HEK293 (cell line): ENCODE measurements at regions of chr3 and their contacts with region 1.

Region 1: GRCh38 chr3:156217674-156218352 is 97.4 kb downstream of the KCNAB1 start:
- H3K4me3 ChIP-seq: no peak overlapping the region
- H3K27ac ChIP-seq: no peak overlapping the region; the same call in 1 of the 2 replicates
- H3K4me1 ChIP-seq: no peaks in the 10 kb centered on the region
- CTCF ChIP-seq: no peak

Region 2: GRCh38 chr3:156382458-156383346 is 164.9 kb after region 1 on chr3:
- CTCF ChIA-PET with region 1: no interaction called
- POLR2A ChIA-PET with region 1: no interaction called
- H3K4me3 ChIP-seq: no peak overlapping the region
- H3K27ac ChIP-seq: no peak overlapping the region
- H3K4me1 ChIP-seq: no peaks in the 10 kb centered on the region
- CTCF ChIP-seq: no peak

Region 3: GRCh38 chr3:156542715-156543555 is 325.1 kb after region 1 on chr3:
- CTCF ChIA-PET with region 1: interaction called, 10 read pairs
- POLR2A ChIA-PET with region 1: no interaction called
- H3K4me3 ChIP-seq: no peak overlapping the region
- H3K27ac ChIP-seq: no peak overlapping the region
- H3K4me1 ChIP-seq: no peaks in the 10 kb centered on the region
- CTCF ChIP-seq: no peak